CD8-positive, alpha-beta T cell (primary cell): ENCODE measurements at regions of chr9 and their contacts with region 1.

Region 1: DNA sequence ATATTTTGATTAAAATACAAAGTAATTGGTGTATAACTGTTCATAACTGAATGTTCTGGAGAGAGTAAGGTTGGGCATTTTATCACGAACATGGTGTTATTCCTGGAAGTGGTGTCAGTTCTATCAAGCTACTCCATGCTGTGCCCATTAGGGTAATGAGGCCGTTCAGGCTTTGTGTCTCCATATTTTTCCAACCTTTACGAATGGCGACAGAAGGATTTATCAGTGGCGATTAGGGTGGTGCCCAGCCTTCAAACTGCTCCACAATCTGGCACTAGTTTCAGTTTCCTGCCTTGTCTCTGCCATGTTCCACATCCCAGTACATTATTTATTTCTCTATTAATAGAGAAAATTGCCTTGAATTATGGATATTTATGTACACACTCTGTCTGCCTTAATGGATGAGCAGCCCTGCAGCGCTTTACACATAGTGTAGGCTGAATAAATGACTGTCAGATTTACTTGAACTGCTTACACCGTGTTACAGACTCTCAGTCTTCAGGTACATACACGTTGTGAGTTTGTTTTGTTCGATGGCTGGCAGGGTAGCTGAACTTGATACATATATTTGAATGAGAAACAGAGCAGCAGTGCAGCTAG is 23.9 kb upstream of the TMC1 start:
- DNase-seq: no peak
- ATAC-seq: no peak
- H3K4me3 ChIP-seq: no peak overlapping the region
- H3K4me3 Mint-ChIP-seq: no peak overlapping the region
- H3K27ac ChIP-seq: no peak overlapping the region
- H3K27ac Mint-ChIP-seq: no peak overlapping the region
- H3K4me1 ChIP-seq: no peaks in the 10 kb centered on the region
- H3K4me1 Mint-ChIP-seq: no peaks in the 10 kb centered on the region
- H3K27me3 ChIP-seq: no peaks in the 10 kb centered on the region
- H3K27me3 Mint-ChIP-seq: peaks cover 4% of the 10 kb centered on the region
- CTCF ChIP-seq: no peak

Region 2: DNA sequence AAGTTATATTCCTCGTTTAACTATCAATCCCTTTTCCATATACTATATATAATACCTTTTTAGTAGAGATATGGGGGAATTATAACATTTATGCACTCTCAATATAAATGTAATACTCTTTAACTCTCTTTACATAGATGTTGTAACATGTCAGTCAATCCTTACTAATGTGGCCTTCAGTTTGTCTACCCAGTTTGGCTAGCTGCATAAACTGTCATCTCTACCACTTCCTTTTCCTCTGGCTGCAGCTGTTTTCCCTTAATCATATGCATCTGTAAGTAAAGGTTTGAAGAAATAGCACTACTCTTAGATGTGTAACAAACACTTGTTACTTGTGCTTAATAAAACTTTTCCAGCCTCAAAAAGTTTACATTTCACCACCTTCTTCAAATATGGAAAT is 600.0 kb before region 1 on chr9:
- CTCF ChIA-PET with region 1: no interaction called
- POLR2A ChIA-PET with region 1: no interaction called
- intact Hi-C with region 1: no loop called
- DNase-seq: peak in 3 of 9 experiments; percentile 9 to 71 (median 53)
- ATAC-seq: peak; percentile 78
- H3K4me3 ChIP-seq: no peak overlapping the region
- H3K4me3 Mint-ChIP-seq: peak overlapping the region; percentile 35
- H3K27ac ChIP-seq: peak overlapping the region in 1 of 2 experiments; percentile 69
- H3K27ac Mint-ChIP-seq: peak overlapping the region; percentile 19
- H3K4me1 ChIP-seq: peaks cover 54% of the 10 kb centered on the region
- H3K4me1 Mint-ChIP-seq: peaks cover 79% of the 10 kb centered on the region
- H3K27me3 ChIP-seq: no peaks in the 10 kb centered on the region
- H3K27me3 Mint-ChIP-seq: no peaks in the 10 kb centered on the region
- CTCF ChIP-seq: no peak

Region 3: DNA sequence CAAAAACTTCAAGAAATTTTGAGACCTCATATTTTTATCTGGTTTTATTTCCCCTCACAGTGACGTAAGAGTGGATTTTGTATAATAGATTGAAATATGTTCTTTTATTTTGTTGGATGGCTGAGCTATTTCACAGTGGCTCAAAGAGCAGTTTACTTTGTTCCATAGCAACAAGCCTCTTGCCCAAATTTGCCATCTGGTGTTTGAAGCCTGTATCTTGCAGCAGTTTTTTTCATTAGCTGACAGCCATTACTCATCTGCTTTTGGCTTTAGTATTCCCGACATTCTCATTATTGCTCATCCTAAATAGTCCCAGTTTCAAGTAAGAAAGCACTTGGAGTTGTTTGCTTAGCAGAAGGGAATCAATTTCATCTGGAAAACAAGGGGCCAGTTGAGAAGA is 312.0 kb before region 1 on chr9:
- CTCF ChIA-PET with region 1: no interaction called
- POLR2A ChIA-PET with region 1: no interaction called
- intact Hi-C with region 1: no loop called
- DNase-seq: no peak
- ATAC-seq: no peak
- H3K4me3 ChIP-seq: no peak overlapping the region
- H3K4me3 Mint-ChIP-seq: no peak overlapping the region
- H3K27ac ChIP-seq: no peak overlapping the region
- H3K27ac Mint-ChIP-seq: no peak overlapping the region
- H3K4me1 ChIP-seq: no peaks in the 10 kb centered on the region
- H3K4me1 Mint-ChIP-seq: no peaks in the 10 kb centered on the region
- H3K27me3 ChIP-seq: no peaks in the 10 kb centered on the region
- H3K27me3 Mint-ChIP-seq: peaks cover 3% of the 10 kb centered on the region
- CTCF ChIP-seq: no peak

Region 4: GRCh38 chr9:72557549-72557948 is 60.0 kb after region 1 on chr9:
- CTCF ChIA-PET with region 1: no interaction called
- POLR2A ChIA-PET with region 1: no interaction called
- intact Hi-C with region 1: loop called in 1 of 2 experiments (anchors 10 kb)
- DNase-seq: peak in 4 of 9 experiments; percentile 6 to 17 (median 9)
- ATAC-seq: peak; percentile 36
- H3K4me3 ChIP-seq: no peak overlapping the region
- H3K4me3 Mint-ChIP-seq: no peak overlapping the region
- H3K27ac ChIP-seq: no peak overlapping the region
- H3K27ac Mint-ChIP-seq: no peak overlapping the region
- H3K4me1 ChIP-seq: no peaks in the 10 kb centered on the region
- H3K4me1 Mint-ChIP-seq: peaks cover 5% of the 10 kb centered on the region
- H3K27me3 ChIP-seq: no peaks in the 10 kb centered on the region
- H3K27me3 Mint-ChIP-seq: peaks cover 2% of the 10 kb centered on the region
- CTCF ChIP-seq: no peak